OCI-LY7 (cell line): ENCODE measurements at regions of chr6 and their contacts with region 1.

Region 1: DNA sequence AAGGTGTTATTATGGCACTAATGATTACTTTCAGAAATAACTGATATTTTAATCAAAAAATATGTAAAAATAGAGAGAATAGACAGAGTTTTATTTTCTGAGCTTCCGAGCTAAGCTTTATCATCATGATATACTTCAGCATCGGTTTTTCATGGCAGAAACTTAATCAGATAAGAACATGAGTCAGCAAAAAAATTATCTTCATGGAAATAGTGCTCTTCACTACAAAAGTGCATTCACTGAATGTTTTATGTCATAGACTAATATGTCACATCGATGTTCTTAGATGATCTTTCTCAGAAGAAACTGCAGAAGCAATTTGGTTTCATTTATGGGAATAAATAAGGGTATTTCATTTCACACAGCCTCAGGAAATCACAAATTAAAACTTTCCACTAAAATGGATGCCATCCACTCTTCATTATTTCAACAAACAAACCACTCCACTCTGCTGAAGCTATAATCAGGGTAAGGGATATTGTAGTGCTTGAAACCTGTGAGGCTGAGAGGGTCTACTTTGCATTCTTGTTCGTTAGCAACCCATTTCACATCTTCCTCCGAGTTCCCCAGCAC is 10.2 kb upstream of the MAP3K7 start:
- DNase-seq: no peak
- H3K4me3 ChIP-seq: no peak overlapping the region
- H3K27ac ChIP-seq: no peak overlapping the region
- H3K4me1 ChIP-seq: no peaks in the 10 kb centered on the region
- CTCF ChIP-seq: no peak

Region 2: DNA sequence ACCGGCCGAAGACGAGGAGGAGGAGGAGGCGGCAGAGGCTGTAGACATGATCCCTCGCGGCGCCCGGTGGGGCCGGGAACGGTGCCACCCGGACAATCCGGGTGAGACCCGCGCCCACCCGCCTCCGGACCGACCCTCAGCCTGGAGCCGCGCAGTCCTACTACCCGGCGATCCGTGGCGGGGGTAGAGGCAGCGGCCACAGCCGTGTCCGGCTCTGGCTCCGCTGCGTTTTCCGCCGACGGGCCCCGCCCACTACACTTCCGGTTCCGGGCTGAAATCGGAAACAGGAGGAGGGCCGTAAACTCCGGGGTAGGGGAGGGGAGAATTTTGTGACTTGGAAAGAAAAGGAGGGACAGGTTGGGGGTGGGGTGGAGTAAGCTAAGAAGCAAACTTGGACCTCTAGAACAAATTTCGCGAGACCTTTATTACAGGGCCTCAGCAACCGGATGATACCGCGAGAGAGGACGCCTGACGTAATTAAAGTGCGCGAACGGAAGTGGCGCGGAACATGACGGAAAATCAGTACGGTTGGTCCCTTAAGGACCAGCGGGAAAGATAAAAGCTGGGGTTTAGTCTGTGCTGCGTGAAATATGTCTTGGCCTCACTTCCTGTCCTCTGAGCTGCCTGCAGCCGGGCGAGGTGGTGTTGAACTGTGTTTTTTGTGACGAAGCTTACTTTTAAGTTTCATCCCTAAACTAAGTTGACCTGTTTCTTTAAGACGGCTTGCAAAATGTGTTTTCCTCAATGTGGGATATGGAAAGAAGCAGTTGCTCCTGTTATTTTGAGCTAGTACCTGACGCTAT is 10.0 kb before region 1 on chr6 and contains the start of gene MAP3K7:
- CTCF ChIA-PET with region 1: no interaction called
- POLR2A ChIA-PET with region 1: interaction called, 14 read pairs
- intact Hi-C with region 1: no loop called
- DNase-seq: peak; percentile 96
- H3K4me3 ChIP-seq: peak within 1 kb of the TSS; percentile 99
- H3K27ac ChIP-seq: peak within 1 kb of the TSS; percentile 77
- H3K4me1 ChIP-seq: peaks cover 24% of the 10 kb centered on the region
- CTCF ChIP-seq: no peak
- total RNA-seq, gene MAP3K7: 25.6 and 29.5 TPM in 2 replicates